ENCODE measurements at regions of chr12 and their contacts with region 1.

Region 1: DNA sequence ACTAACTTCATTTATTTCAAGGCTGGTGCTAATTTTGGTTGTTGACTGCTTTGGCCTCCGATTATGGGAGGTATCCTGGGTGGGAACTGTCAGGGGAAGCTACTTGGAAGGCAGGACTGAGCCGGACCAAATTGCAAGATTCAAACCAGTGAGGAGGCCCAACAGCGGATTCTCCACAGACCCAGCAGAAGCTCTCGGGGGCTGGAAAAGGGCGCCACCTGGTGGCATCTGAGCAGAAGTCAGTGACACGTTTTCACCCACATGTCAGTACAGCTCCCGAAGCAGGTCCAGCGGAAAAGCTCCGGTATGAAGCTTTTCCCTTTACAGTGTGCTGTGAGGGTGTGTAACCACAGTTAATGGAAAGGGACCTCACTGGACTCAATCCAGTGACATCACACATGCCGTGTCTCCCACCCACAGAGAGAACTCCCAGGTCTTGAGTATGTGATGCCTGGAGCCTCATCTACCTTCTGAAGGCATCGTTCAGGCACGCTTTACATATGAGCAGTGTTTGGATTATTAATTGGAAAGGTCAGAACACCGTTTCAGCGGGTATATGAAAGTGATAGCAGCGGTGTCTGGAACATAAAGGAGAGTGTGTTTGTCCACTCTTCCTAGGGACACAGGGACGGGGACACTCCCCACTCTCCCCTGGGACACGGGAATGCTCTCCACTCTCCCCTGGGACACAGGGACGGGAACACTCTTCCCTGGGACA is 3.6 kb upstream of the P2RX2 start:
- DNase-seq: peak; percentile 91
- H3K4me3 ChIP-seq: no peak overlapping the region
- H3K27ac ChIP-seq: no peak overlapping the region
- H3K4me1 ChIP-seq: peaks cover 0 to 17% (median 11%) of the 10 kb centered on the region in 4 donors
- H3K27me3 ChIP-seq: peaks cover 40 to 68% (median 57%) of the 10 kb centered on the region in 3 donors
- CTCF ChIP-seq: peak; percentile 60 to 88 (median 84)
- EP300 ChIP-seq: no peak
- POLR2A ChIP-seq: no peak

Region 2: DNA sequence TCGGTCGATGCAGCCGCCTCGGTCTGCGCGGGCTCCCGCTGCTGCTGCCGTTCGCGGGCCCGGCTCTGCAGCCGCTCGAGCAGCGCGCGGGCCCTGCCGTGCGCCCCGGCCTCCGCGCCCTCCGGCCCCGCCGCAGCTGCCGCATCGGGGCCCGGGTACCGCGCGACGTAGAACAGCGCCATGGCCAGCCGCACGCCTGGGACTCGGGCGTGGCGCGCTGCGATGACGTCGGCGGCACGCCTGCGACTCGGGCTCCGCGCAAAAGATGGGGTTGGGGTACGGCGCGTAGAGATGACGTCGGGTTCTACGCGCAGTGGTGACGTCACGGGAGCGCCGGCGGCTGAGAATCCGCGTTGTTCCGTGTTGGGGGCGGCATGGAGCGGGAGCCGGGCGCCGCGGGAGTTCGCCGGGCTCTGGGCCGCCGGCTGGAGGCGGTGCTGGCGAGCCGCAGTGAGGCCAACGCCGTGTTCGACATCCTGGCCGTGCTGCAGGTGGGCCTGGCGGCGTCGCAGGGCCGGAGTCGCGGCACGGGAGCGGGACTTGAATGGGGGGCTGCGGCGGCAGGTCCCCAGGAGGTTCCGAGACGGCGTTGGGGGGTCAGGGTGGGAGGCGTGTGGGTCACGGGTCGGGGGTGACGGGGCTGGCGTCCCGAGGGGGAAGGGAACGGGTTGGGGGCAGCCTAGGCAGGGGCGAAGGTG is 470.8 kb before region 1 on chr12 and contains the starts of genes DDX51 and NOC4L:
- intact Hi-C with region 1: loop called (anchors 5 kb)
- DNase-seq: peak; percentile 97
- H3K4me3 ChIP-seq: peak within 1 kb of the TSS; percentile 96 to 98 (median 96)
- H3K27ac ChIP-seq: peak within 1 kb of the TSS; percentile 86 to 93 (median 90)
- H3K4me1 ChIP-seq: peaks cover 0 to 30% (median 25%) of the 10 kb centered on the region in 4 donors
- H3K27me3 ChIP-seq: no peaks in the 10 kb centered on the region
- CTCF ChIP-seq: no peak
- EP300 ChIP-seq: peak in 2 of 4 donors; percentile 19 to 78
- POLR2A ChIP-seq: peak; percentile 12 to 36
- total RNA-seq, gene DDX51: 6.8 to 13.7 (median 8.5) TPM
- total RNA-seq, gene NOC4L: 5.4 to 9.4 (median 7.5) TPM

Region 3: DNA sequence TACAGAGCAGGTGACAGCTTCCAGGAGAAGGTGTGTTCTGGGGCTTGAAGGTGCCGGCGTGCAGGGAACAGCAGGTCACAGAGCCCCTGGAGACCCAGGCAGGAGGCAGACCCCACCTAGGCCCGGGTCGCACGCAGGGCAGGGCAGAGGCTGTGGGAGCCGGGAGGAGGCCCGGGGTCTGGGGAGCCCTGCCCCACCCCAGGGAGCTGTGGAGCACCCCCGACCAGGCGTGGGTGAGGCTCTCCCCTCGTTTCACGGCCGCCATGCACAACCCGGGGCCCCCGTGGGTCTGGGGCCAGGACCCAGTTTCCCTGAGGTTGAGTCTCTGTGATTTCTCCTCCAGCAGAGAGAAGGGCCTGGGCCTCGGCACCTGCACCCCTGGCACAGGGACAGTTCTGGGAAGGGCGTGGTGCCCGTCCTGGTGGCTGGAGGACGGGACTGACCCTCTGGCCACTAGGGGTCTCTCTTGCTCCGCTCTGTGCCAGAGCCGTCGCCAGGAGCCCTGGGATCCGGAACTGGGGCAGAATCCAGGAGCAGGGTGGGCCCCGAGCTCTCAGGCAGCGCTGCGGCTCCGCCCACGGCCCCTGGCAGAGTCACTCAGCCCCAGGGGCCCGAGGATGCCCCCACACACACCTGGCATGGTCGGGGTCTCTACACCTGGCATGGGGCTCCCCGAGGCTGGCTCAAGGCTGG is 200.2 kb before region 1 on chr12:
- intact Hi-C with region 1: loop called (anchors 2 kb)
- DNase-seq: peak; percentile 85
- H3K4me3 ChIP-seq: no peak overlapping the region
- H3K27ac ChIP-seq: no peak overlapping the region
- H3K4me1 ChIP-seq: peaks cover 0 to 11% (median 9%) of the 10 kb centered on the region in 4 donors
- H3K27me3 ChIP-seq: peaks cover 6 to 58% (median 46%) of the 10 kb centered on the region in 3 donors
- CTCF ChIP-seq: peak; percentile 76 to 94 (median 80)
- EP300 ChIP-seq: no peak
- POLR2A ChIP-seq: no peak

Region 4: DNA sequence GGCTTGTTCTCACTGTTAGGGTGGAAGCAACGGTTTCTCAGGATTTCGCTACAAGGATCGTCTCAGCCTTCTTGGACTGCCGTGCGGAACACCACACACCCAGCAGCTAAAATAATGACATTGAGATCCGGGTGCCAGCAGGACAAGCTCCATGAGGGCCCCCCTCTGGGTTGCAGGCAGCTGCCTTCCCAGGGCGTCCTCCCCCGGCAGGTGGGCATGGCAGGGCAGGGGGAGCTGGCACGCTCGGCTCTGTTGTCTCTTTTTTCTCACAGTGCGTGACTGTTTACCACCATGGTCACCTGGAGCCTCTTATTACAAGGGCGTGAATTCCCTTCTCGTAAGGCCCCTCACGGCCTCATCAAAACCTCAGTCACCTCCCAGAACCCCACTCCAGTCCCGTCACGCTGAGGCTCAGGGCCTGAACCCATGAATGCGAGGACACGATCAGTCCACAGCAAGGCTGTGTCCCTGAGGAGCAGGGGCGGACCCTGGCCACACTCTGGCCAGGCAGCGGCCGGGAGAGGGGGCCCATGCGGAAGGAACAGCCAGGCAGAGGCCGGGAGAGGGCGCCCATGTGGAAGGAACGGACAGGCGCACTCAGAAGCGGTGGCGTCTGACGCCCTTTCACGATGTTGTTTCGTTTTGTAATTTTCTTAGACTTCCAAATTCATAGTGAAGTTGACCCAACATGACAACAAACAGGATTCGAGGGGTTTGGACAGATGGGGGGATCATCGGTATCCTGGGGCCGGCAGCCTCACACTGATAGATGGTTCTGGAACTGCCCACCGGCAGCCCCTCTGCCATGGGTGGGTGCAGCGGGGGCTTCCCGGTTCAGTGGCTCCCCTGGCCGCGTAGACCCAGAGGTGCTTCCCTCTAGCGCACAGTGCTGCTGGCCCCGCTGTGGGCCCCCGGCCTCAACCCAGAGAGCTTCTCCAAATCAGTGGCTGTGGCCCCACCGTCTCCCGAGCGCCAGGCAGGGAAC is 14.7 kb before region 1 on chr12:
- intact Hi-C with region 1: loop called (anchors 2 kb)
- DNase-seq: peak; percentile 81
- H3K4me3 ChIP-seq: peak overlapping the region; percentile 23 to 53 (median 42)
- H3K27ac ChIP-seq: peak overlapping the region in 2 of 4 donors; percentile 1 to 54
- H3K4me1 ChIP-seq: peaks cover 0 to 25% (median 17%) of the 10 kb centered on the region in 4 donors
- H3K27me3 ChIP-seq: peaks cover 13 to 40% (median 29%) of the 10 kb centered on the region in 3 donors
- CTCF ChIP-seq: peak in 3 of 4 experiments; percentile 33 to 57 (median 52)
- EP300 ChIP-seq: no peak
- POLR2A ChIP-seq: no peak

Region 5: DNA sequence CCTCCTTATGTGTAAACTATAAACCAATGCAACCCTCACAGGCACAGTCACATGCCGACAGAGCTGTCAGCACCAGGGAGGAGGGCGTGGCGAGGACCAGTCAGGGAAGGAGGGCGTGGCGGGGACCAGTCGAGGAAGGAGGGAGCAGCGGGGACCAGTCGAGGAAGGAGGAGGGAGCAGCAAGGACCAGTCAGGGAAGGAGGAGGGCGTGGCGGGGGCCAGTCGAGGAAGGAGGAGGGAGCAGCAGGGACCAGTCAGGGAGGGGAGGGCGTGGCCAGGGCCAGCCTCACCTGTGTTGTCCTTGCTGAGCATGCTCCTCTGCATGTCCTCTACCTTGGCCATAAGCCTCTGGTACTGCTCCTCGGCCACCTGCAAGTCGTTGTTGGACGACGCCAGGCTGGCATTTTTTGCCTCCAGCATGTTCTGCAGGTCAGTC is 189.4 kb after region 1 on chr12:
- intact Hi-C with region 1: no loop called
- DNase-seq: no peak
- H3K4me3 ChIP-seq: no peak overlapping the region
- H3K27ac ChIP-seq: no peak overlapping the region
- H3K4me1 ChIP-seq: no peaks in the 10 kb centered on the region
- H3K27me3 ChIP-seq: no peaks in the 10 kb centered on the region
- CTCF ChIP-seq: no peak
- EP300 ChIP-seq: no peak
- POLR2A ChIP-seq: no peak

Measured in sigmoid colon (tissue), 7 donors.